IMR-90 (cell line): ENCODE measurements at regions of chr5 and their contacts with region 1.

Region 1: GRCh38 chr5:81292130-81292529 is 9.3 kb upstream of the ZCCHC9 start:
- DNase-seq: no peak
- ATAC-seq: no peak
- H3K4me3 ChIP-seq: no peak overlapping the region
- H3K27ac ChIP-seq: no peak overlapping the region
- H3K4me1 ChIP-seq: no peaks in the 10 kb centered on the region
- H3K27me3 ChIP-seq: no peaks in the 10 kb centered on the region
- CTCF ChIP-seq: no peak
- POLR2A ChIP-seq: no peak
- RAD21 ChIP-seq: no peak

Region 2: GRCh38 chr5:80686757-80687156 is 605.4 kb before region 1 on chr5:
- CTCF ChIA-PET with region 1: no interaction called
- POLR2A ChIA-PET with region 1: no interaction called
- dilution Hi-C with region 1: no loop called
- in situ Hi-C with region 1: loop called (anchors 10 kb)
- intact Hi-C with region 1: no loop called
- DNase-seq: peak; percentile 36
- ATAC-seq: peak; percentile 44; the same call in 1 of the 2 replicates
- H3K4me3 ChIP-seq: no peak overlapping the region
- H3K27ac ChIP-seq: no peak overlapping the region
- H3K4me1 ChIP-seq: peaks cover 2% of the 10 kb centered on the region; the same call in 1 of the 2 replicates
- H3K27me3 ChIP-seq: no peaks in the 10 kb centered on the region
- CTCF ChIP-seq: peak; percentile 58
- POLR2A ChIP-seq: no peak
- RAD21 ChIP-seq: peak; percentile 60

Region 3: GRCh38 chr5:81247441-81247972 is 44.6 kb before region 1 on chr5:
- CTCF ChIA-PET with region 1: no interaction called
- POLR2A ChIA-PET with region 1: no interaction called
- dilution Hi-C with region 1: no loop called
- in situ Hi-C with region 1: no loop called
- intact Hi-C with region 1: loop called (anchors 10 kb)
- DNase-seq: peak; percentile 66
- ATAC-seq: peak; percentile 72
- H3K4me3 ChIP-seq: no peak overlapping the region
- H3K27ac ChIP-seq: no peak overlapping the region
- H3K4me1 ChIP-seq: peaks cover 5% of the 10 kb centered on the region
- H3K27me3 ChIP-seq: no peaks in the 10 kb centered on the region
- CTCF ChIP-seq: no peak
- POLR2A ChIP-seq: no peak
- RAD21 ChIP-seq: no peak